ENCODE measurements at regions of chr3 and their contacts with region 1.

Region 1: GRCh38 chr3:5026331-5027218 is 47.3 kb downstream of the BHLHE40 start:
- DNase-seq: peak; percentile 88
- ATAC-seq: peak; percentile 37
- H3K4me3 Mint-ChIP-seq: peak overlapping the region; percentile 69
- H3K27ac Mint-ChIP-seq: peak overlapping the region; percentile 84
- H3K4me1 Mint-ChIP-seq: peaks cover 58% of the 10 kb centered on the region
- H3K27me3 Mint-ChIP-seq: peaks cover 6% of the 10 kb centered on the region

Region 2: DNA sequence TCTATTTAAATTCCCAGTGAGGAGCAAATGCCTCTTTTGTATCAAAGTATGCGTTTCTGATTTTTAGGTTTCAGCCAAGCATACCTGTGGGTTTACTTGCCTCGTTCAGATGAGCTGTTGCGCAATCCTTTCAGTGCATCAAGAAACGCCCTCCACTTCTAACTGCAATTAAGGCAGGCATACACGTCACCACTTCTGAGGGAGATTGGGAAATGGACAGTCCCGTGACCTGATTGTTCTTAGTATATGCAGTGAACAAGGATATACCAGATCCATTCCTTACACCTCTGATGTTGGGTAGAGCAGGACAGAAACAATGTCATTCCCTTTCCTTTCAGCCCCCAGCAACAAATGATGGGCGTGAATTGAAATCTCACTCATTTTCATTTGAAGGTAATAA is 314.4 kb before region 1 on chr3:
- CTCF ChIA-PET with region 1: interaction called, 24 read pairs
- POLR2A ChIA-PET with region 1: no interaction called
- intact Hi-C with region 1: loop called in 1 of 2 experiments (anchors 1 kb)
- DNase-seq: no peak
- ATAC-seq: no peak
- H3K4me3 Mint-ChIP-seq: no peak overlapping the region
- H3K27ac Mint-ChIP-seq: no peak overlapping the region
- H3K4me1 Mint-ChIP-seq: no peaks in the 10 kb centered on the region
- H3K27me3 Mint-ChIP-seq: no peaks in the 10 kb centered on the region

Region 3: DNA sequence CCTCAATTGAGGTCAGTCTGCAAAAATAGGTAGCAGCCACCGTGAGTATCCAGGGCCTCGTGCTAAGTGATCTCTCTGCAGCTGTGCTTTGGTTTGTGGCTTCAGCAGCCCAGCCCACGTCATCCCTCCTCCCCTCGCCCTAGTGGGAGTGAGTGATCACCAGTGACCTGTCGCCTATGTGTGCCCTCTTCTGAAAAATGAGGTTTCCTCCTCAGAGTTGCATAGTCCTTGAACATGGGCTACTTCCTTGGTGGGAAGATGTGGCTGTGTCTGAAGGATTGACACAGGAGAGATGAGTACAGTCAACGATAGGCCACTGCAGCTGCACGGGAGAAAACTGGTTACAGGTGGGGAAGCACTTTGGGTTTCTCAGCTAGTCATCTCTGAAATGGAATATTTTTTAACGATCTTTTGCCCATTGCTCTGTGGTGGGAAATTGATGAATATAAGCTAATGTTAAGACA is 192.1 kb before region 1 on chr3:
- CTCF ChIA-PET with region 1: interaction called, 8 read pairs
- POLR2A ChIA-PET with region 1: interaction called, 3 read pairs
- intact Hi-C with region 1: loop called (anchors 1 to 2 kb)
- DNase-seq: peak; percentile 84
- ATAC-seq: peak; percentile 31
- H3K4me3 Mint-ChIP-seq: peak overlapping the region; percentile 26
- H3K27ac Mint-ChIP-seq: peak overlapping the region; percentile 90
- H3K4me1 Mint-ChIP-seq: peaks cover 86% of the 10 kb centered on the region
- H3K27me3 Mint-ChIP-seq: no peaks in the 10 kb centered on the region

Region 4: GRCh38 chr3:4906107-4906621 is 120.4 kb before region 1 on chr3:
- CTCF ChIA-PET with region 1: interaction called, 9 read pairs
- POLR2A ChIA-PET with region 1: interaction called, 3 read pairs
- intact Hi-C with region 1: loop called in 1 of 2 experiments (anchors 1 kb)
- DNase-seq: peak; percentile 54
- ATAC-seq: peak; percentile 75
- H3K4me3 Mint-ChIP-seq: no peak overlapping the region
- H3K27ac Mint-ChIP-seq: peak overlapping the region; percentile 53
- H3K4me1 Mint-ChIP-seq: peaks cover 75% of the 10 kb centered on the region
- H3K27me3 Mint-ChIP-seq: no peaks in the 10 kb centered on the region

Region 5: GRCh38 chr3:5041315-5041714 is 14.7 kb after region 1 on chr3:
- CTCF ChIA-PET with region 1: interaction called, 11 read pairs
- POLR2A ChIA-PET with region 1: interaction called, 7 read pairs
- intact Hi-C with region 1: no loop called
- DNase-seq: no peak
- ATAC-seq: no peak
- H3K4me3 Mint-ChIP-seq: no peak overlapping the region
- H3K27ac Mint-ChIP-seq: no peak overlapping the region
- H3K4me1 Mint-ChIP-seq: peaks cover 13% of the 10 kb centered on the region
- H3K27me3 Mint-ChIP-seq: no peaks in the 10 kb centered on the region

Region 6: DNA sequence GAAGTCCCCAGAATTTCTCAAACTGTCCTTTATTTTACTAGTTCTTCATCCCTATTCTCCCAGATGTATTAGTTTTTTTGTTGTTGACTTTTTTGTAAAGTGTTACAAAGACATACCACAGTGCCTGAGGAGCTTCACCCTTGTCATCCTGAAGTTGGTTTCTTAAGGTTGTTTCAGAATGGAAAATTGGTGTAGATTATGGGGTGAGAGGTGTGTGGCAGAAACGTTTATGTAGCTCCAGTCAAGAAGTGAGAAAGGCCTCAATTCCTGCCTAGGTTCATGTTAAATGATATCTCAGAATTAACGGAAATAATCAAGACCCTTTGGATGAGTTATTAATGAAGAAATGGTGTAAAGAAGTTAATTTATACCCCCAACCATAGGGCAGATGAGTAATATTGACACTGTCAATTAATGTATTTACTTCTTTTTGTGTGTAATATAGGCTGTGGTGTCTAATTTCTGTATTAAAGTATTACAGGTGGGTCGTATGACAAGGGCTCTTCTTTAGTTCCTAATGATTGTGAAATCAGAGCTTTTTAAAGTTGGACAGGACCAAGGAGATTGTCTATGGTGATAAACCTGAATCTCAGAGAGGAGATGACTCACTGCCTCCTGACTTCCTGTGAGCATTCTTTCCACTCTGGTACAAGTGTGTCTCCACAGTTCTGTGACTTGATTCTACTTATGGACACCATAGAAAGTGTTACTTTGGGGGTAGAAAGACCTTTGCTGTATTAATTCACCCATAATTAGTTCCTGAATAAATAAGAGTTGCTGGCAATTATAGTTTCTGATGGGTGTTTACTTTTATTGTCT is 168.0 kb after region 1 on chr3:
- CTCF ChIA-PET with region 1: interaction called, 9 read pairs
- POLR2A ChIA-PET with region 1: no interaction called
- intact Hi-C with region 1: loop called (anchors 1 to 5 kb)
- DNase-seq: peak; percentile 62
- ATAC-seq: peak; percentile 34
- H3K4me3 Mint-ChIP-seq: peak overlapping the region; percentile 68
- H3K27ac Mint-ChIP-seq: peak overlapping the region; percentile 98
- H3K4me1 Mint-ChIP-seq: peaks cover 86% of the 10 kb centered on the region
- H3K27me3 Mint-ChIP-seq: no peaks in the 10 kb centered on the region

Measured in activated CD4-positive, alpha-beta T cell treated with anti-CD3 and anti-CD28 coated beads for 36 hours (primary cell).